ENCODE measurements at regions of chr4 and their contacts with region 1.

Region 1: DNA sequence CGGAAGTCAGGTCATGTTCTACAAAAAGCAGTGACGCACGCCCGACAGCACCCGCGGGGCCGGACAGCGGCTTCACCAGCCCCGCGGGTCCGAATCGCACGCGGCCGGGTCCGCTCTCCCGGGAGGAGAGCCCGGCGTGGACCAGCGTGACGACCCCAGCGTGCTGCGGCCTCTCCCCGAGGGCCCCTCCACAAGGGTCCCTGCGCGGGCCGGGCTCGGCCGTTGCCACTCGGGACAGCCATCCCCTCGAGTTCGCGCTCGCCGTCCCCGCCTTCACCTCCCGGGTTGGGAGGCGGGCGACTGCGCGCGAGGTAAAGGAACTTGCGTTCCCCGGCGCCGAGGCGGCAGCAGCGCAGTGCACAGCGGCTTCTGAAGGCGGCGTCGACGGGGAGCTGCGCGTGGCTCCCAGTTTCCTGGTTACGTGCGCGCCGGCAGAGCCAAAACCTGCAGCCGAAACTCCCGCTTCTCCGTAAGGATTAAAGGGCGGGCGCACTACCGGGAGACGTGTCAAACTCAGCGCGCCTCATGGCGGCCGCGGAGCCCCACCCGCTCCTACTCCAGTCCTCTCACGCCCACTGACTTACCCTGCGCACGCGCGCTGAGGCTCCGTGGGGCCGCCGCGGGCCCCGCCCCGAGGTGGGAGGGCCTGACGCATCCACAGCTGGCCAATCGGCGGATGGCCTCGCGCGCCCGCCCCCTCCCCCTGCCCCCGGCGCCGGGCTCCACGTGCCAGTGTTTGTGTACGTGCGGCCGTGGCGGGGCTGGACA is 416 bp upstream of the LRP2BP start:
- DNase-seq: peak; percentile 96
- ATAC-seq: peak; percentile 85
- H3K4me3 ChIP-seq: peak overlapping the region; percentile 65 to 75 (median 71); a peak in 5 of 6 replicates
- H3K27ac ChIP-seq: peak overlapping the region; percentile 95
- H3K4me1 ChIP-seq: peaks cover 44% of the 10 kb centered on the region
- H3K27me3 ChIP-seq: no peaks in the 10 kb centered on the region
- CTCF ChIP-seq: no peak
- EP300 ChIP-seq: no peak; a peak in 1 of 4 replicates
- POLR2A ChIP-seq: peak; percentile 5 to 52; a peak in 2 of 4 replicates
- RAD21 ChIP-seq: peak; percentile 42; the same call in 1 of the 2 replicates

Region 2: GRCh38 chr4:185203486-185204237 is 192.5 kb before region 1 on chr4 and contains the start of gene CFAP97:
- CTCF ChIA-PET with region 1: no interaction called
- POLR2A ChIA-PET with region 1: interaction called, 3 read pairs
- in situ Hi-C with region 1: no loop called
- intact Hi-C with region 1: loop called (anchors 5 kb)
- DNase-seq: peak; percentile 65
- ATAC-seq: peak; percentile 73
- H3K4me3 ChIP-seq: peak within 1 kb of the TSS; percentile 66 to 82 (median 73)
- H3K27ac ChIP-seq: peak within 1 kb of the TSS; percentile 96
- H3K4me1 ChIP-seq: peaks cover 55% of the 10 kb centered on the region
- H3K27me3 ChIP-seq: no peaks in the 10 kb centered on the region
- CTCF ChIP-seq: no peak
- EP300 ChIP-seq: peak in 1 of 2 experiments; percentile 35; a peak in 1 of 4 replicates
- POLR2A ChIP-seq: peak in 1 of 2 experiments; percentile 34; a peak in 1 of 4 replicates
- RAD21 ChIP-seq: no peak; the same call in 1 of the 2 replicates
- total RNA-seq, gene CFAP97: 44.4 and 67.9 TPM in 2 replicates

Region 3: DNA sequence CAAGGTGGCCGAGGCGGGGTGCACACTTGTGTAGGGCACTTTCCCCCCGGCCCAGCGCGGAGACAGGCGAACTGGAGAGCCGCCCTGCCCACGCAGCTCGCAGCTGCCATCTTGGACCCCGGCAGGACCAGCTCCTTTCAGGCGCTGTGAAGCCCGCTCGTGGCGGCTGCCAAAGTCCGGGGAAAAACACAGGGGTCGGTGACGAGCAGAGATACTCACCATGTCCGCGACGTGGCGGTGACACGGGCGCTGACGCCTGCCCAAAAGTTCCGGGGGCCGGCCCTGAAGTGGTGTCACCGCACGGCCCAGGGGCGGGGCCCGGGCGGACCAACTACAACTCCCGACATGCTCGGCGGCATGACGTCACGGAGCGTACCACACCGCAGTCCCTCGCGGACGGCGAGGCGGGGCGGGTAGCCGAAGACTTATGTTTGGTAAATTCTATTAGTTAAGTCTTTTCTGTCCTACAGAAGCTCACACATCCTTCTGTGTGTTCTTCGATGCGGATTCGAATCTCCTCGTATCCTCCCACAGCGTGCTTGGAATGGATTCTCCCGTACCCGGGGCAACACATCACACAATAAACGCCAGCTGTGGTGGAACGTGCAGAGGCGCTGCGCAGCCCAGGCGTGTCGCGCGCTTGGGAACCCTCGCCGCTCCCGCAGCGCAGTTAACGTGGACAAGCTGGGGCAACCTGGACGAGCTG is 29.7 kb after region 1 on chr4 and contains the start of gene UFSP2:
- CTCF ChIA-PET with region 1: no interaction called
- POLR2A ChIA-PET with region 1: interaction called, 30 read pairs
- in situ Hi-C with region 1: no loop called
- intact Hi-C with region 1: no loop called
- DNase-seq: peak; percentile 81
- ATAC-seq: peak; percentile 95
- H3K4me3 ChIP-seq: peak within 1 kb of the TSS; percentile 82 to 90 (median 89)
- H3K27ac ChIP-seq: peak within 1 kb of the TSS; percentile 95
- H3K4me1 ChIP-seq: peaks cover 30% of the 10 kb centered on the region
- H3K27me3 ChIP-seq: no peaks in the 10 kb centered on the region; a peak in 2 of 5 replicates
- CTCF ChIP-seq: peak; percentile 40
- EP300 ChIP-seq: no peak
- POLR2A ChIP-seq: peak; percentile 57 to 81
- RAD21 ChIP-seq: peak; percentile 49; the same call in 1 of the 2 replicates
- total RNA-seq, gene UFSP2: 32.3 and 44.8 TPM in 2 replicates